ENCODE measurements at regions of chr17 and their contacts with region 1.

Region 1: DNA sequence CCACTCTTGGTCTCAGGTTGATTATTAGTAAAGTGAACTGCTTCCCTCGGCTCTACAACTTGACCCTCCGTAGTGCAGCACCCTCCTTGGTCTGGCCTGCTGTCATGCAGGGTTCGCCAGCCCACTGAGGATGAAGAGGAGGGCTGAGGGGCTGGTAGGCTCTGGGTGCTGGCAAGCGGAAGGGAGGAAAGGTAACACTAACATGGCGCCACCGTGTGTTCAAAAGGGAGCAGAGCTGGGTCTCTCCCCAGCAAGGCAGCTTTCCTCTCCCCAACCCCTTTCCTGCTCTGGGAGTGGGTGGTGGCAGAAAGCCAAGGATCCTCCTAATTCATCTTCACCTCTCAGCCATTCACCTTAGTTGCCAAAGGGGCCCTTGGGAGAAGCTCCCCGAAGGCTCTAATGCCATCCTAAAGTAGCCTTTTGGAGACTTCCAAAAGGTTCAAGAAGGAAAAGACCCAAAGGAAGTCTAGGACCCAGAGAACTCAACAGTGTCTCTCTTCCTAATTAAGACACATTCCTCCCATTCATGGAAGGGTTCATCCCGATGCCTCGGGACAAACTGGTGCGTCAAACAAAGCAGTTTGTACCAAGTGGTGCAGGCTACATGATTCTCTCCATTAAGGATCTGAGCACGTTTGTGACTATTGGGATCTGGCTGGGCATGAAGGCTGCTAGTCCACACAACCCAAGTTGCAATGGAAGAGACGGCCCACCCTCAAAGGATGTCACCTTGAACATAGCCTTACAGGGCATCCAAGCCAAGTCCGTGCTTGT is 90.8 kb upstream of the TOB1 start:
- H3K4me3 Mint-ChIP-seq: no peak overlapping the region
- H3K27ac Mint-ChIP-seq: no peak overlapping the region
- H3K4me1 Mint-ChIP-seq: peaks cover 39% of the 10 kb centered on the region
- H3K27me3 Mint-ChIP-seq: peaks cover 8% of the 10 kb centered on the region

Region 2: GRCh38 chr17:50853015-50853615 is 103.8 kb before region 1 on chr17:
- intact Hi-C with region 1: loop called (anchors 1 kb)
- H3K4me3 Mint-ChIP-seq: no peak overlapping the region
- H3K27ac Mint-ChIP-seq: peak overlapping the region; percentile 81
- H3K4me1 Mint-ChIP-seq: peaks cover 39% of the 10 kb centered on the region
- H3K27me3 Mint-ChIP-seq: no peaks in the 10 kb centered on the region

Region 3: GRCh38 chr17:50944054-50944901 is 12.7 kb before region 1 on chr17:
- intact Hi-C with region 1: no loop called
- H3K4me3 Mint-ChIP-seq: peak overlapping the region; percentile 70
- H3K27ac Mint-ChIP-seq: peak overlapping the region; percentile 71
- H3K4me1 Mint-ChIP-seq: peaks cover 35% of the 10 kb centered on the region
- H3K27me3 Mint-ChIP-seq: peaks cover 10% of the 10 kb centered on the region